ENCODE measurements at regions of chr9 and their contacts with region 1.

Region 1: GRCh38 chr9:89466451-89467277 is 31.2 kb downstream of the SEMA4D start:
- DNase-seq: no peak
- H3K4me3 Mint-ChIP-seq: peak overlapping the region; percentile 30
- H3K27ac Mint-ChIP-seq: peak overlapping the region; percentile 99
- H3K4me1 Mint-ChIP-seq: peaks cover 93% of the 10 kb centered on the region
- H3K27me3 Mint-ChIP-seq: no peaks in the 10 kb centered on the region

Region 2: DNA sequence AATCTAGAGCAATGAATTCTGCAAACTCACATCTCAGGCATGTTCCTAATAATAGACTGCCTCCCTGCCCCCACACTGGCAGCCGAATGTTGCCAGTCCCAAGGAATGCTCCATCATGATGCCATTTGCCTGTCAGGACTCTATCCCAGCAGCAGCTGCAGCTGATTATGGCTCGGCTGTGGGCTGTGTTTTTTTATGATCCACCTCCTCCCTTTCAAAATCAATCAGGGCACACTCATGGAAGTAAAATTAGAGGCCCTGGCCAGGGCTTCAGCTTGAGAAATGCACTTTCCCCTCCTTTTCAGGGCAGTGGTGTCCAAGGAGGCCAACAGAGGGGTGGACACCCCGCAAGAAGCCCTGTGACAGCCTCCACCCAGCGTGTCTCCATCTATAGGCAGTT is 652.1 kb before region 1 on chr9:
- intact Hi-C with region 1: no loop called
- DNase-seq: no peak
- H3K4me3 Mint-ChIP-seq: no peak overlapping the region
- H3K27ac Mint-ChIP-seq: no peak overlapping the region
- H3K4me1 Mint-ChIP-seq: no peaks in the 10 kb centered on the region
- H3K27me3 Mint-ChIP-seq: peaks cover 55% of the 10 kb centered on the region

Region 3: GRCh38 chr9:89375191-89375760 is 91.4 kb before region 1 on chr9:
- intact Hi-C with region 1: no loop called
- DNase-seq: peak; percentile 38
- H3K4me3 Mint-ChIP-seq: no peak overlapping the region
- H3K27ac Mint-ChIP-seq: peak overlapping the region; percentile 77
- H3K4me1 Mint-ChIP-seq: peaks cover 53% of the 10 kb centered on the region
- H3K27me3 Mint-ChIP-seq: no peaks in the 10 kb centered on the region

Region 4: DNA sequence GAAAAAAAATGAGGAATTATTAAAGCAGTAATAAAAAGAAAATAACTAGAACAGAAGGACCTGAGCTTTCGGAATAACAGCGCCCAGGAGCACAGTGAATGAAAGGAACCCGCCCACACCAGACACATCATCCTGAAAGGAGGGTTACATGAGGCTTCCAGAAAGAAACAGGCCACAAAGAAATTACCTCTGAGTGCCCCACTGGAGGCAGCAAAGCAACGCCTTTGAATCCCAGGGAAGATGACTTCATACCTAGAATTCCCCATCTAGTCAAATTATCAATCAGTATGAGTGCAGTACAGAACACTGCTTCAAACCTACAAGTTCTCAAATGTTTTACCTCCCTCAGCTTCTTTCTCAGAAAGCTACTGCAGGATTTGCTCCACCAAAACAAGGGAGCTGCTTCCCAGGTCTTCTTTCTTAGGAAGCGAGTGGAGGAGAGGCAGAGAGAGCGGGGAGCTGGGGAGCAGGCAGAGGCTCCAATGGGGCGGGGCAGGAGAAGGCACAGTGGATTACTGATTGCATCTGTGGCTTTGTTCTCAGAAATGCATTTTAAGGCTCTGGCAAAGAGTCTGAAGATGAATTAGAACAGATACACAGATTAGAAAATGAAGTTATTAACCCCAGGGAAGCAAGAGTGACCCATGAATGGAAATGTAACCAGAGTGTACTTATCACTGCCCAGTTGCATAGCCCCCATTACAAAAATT is 55.9 kb before region 1 on chr9:
- intact Hi-C with region 1: loop called (anchors 2 kb)
- DNase-seq: no peak
- H3K4me3 Mint-ChIP-seq: peak overlapping the region; percentile 64
- H3K27ac Mint-ChIP-seq: peak overlapping the region; percentile 95
- H3K4me1 Mint-ChIP-seq: peaks cover 84% of the 10 kb centered on the region
- H3K27me3 Mint-ChIP-seq: no peaks in the 10 kb centered on the region

Region 5: GRCh38 chr9:89428901-89429890 is 37.5 kb before region 1 on chr9:
- intact Hi-C with region 1: loop called (anchors 1 kb)
- DNase-seq: no peak
- H3K4me3 Mint-ChIP-seq: peak overlapping the region; percentile 17
- H3K27ac Mint-ChIP-seq: peak overlapping the region; percentile 90
- H3K4me1 Mint-ChIP-seq: peaks cover 79% of the 10 kb centered on the region
- H3K27me3 Mint-ChIP-seq: no peaks in the 10 kb centered on the region

Region 6: DNA sequence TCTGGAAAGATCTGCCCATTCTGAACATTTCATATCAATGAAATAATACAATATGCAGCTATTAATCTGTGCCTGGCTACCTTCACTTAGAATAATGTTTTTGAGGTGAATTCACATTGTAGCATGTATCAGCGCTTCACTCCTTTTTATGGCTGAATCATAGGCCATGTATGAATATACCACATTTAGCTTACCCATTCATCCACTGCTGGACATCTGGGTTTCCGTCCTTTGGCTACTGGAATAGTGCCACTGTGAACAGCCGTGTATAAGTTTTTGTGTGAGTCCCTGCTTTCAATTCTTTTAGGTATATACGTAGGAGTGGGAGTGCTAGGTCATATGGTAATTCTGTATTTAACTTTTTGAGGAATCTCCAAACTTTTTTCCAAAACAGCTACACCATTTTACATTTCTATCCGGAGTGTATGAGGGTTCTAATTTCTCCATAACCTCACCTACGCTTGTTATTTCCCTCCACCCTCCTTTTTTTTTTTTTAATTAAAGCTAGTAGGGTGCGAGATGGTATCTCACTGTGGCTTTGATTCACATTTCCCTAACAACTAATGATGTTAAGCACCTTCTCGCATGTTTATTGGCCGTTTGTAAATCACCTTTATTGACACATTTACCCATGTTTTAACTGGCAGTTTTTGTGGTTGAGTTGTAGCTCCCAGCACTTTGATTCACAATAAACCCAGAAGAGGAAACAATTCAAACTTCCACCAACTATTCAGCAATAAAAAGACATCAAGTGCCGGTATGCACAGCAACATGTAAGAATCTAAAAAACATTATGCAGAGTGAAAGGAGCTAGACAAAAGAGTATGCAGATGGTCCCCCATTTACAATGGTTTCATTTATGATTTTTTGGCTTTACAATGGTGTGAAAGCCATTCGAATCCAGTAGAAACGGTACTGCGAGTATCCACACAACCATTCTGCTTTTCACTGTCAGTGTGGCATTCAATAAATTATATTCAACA is 23.2 kb after region 1 on chr9:
- intact Hi-C with region 1: loop called (anchors 2 kb)
- DNase-seq: no peak
- H3K4me3 Mint-ChIP-seq: peak overlapping the region; percentile 70
- H3K27ac Mint-ChIP-seq: peak overlapping the region; percentile 88
- H3K4me1 Mint-ChIP-seq: peaks cover 85% of the 10 kb centered on the region
- H3K27me3 Mint-ChIP-seq: no peaks in the 10 kb centered on the region

Region 7: DNA sequence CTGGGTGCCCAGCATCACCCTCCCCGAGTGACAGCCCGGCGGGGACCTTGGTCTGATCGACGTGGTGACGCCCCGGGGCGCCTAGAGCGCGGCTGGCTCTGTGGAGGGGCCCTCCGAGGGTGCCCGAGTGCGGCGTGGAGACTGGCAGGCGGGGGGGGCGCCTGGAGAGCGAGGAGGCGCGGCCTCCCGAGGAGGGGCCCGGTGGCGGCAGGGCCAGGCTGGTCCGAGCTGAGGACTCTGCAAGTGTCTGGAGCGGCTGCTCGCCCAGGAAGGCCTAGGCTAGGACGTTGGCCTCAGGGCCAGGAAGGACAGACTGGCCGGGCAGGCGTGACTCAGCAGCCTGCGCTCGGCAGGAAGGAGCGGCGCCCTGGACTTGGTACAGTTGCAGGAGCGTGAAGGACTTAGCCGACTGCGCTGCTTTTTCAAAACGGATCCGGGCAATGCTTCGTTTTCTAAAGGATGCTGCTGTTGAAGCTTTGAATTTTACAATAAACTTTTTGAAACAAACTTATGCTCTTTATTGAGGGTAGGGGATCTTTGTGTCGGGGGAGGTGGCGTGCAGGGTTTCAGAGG is 139.5 kb after region 1 on chr9:
- intact Hi-C with region 1: no loop called
- DNase-seq: peak; percentile 32
- H3K4me3 Mint-ChIP-seq: peak overlapping the region; percentile 87
- H3K27ac Mint-ChIP-seq: peak overlapping the region; percentile 88
- H3K4me1 Mint-ChIP-seq: peaks cover 25% of the 10 kb centered on the region
- H3K27me3 Mint-ChIP-seq: peaks cover 10% of the 10 kb centered on the region

Region 8: DNA sequence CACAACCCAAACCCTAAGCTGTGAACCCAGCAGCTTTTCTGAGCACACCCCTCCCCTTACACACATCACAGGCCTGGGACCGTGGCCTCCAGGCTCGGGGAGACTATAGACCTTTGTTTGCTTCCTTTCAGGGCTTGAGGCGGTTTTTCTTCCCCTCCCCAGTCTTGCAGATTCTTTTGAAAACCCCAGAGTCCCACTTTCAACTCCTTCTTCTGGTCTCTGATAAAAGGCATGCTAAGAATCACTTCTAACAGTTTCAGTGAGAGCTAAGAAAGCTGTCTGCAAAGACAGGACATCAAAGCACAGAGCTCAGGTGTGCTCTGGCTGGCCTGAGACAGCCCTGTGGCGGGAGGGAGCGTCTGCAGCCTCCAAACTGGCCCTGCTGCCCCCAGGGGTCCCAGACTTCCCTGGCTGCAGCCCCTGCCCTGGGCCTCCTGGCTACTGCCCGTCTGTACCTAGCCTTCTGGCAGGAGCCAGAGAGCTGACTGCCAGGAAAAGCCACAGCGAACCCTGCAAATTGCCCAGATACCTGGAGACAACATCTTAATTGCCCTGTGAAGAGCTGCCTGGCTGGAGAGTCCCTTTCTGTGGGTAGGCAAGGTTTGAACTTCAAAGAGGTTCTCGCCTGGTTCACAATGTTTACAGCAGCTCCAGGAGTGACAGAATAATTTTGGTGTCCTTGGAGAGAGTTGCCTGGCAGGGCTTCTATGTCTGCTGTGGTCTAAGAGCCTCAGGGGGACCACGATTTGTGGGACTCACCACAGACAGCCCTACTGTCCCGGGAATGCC is 277.1 kb after region 1 on chr9:
- intact Hi-C with region 1: loop called (anchors 10 kb)
- DNase-seq: peak; percentile 73
- H3K4me3 Mint-ChIP-seq: peak overlapping the region; percentile 6
- H3K27ac Mint-ChIP-seq: peak overlapping the region; percentile 97
- H3K4me1 Mint-ChIP-seq: peaks cover 76% of the 10 kb centered on the region
- H3K27me3 Mint-ChIP-seq: no peaks in the 10 kb centered on the region